ENCODE measurements at regions of chr11 and their contacts with region 1.

Region 1: DNA sequence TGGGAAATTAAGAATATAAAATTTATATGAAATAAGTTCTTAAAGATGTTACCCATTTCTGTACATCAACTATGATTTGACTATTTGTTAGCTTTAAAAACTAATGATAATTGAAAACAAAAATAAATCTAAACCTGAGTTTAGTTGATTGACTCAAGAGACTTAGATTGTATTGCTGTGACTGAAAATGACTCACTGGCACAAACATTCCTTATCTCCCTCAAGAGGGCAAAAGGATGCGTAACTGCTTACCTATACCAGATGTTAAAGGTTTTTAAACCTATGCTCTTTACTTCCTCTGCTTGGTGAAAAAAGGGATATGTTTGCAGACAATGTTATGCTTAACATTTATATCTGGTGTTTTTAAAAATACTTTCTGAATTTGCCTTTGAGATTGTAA is 30.3 kb downstream of the ATM start:
- DNase-seq: no peak
- H3K4me3 ChIP-seq: no peak overlapping the region
- H3K4me3 Mint-ChIP-seq: no peak overlapping the region
- H3K27ac ChIP-seq: no peak overlapping the region
- H3K27ac Mint-ChIP-seq: peak overlapping the region in 2 of 8 donors; percentile 18 to 66
- H3K4me1 ChIP-seq: peaks cover 26% of the 10 kb centered on the region
- H3K4me1 Mint-ChIP-seq: peaks cover 37 to 66% (median 59%) of the 10 kb centered on the region in 3 donors
- H3K27me3 ChIP-seq: no peaks in the 10 kb centered on the region
- H3K27me3 Mint-ChIP-seq: no peaks in the 10 kb centered on the region

Region 2: GRCh38 chr11:108222686-108223448 is 30.3 kb before region 1 on chr11 and contains the start of gene ATM:
- CTCF ChIA-PET with region 1: interaction called, 19 read pairs
- POLR2A ChIA-PET with region 1: interaction called, 18 read pairs
- DNase-seq: peak; percentile 98 to 100 (median 99)
- H3K4me3 ChIP-seq: peak within 1 kb of the TSS; percentile 97
- H3K4me3 Mint-ChIP-seq: no peak within 1 kb of the TSS
- H3K27ac ChIP-seq: peak within 1 kb of the TSS; percentile 100
- H3K27ac Mint-ChIP-seq: no peak within 1 kb of the TSS
- H3K4me1 ChIP-seq: peaks cover 31% of the 10 kb centered on the region
- H3K4me1 Mint-ChIP-seq: peaks cover 48 to 66% (median 65%) of the 10 kb centered on the region in 3 donors
- H3K27me3 ChIP-seq: no peaks in the 10 kb centered on the region
- H3K27me3 Mint-ChIP-seq: no peaks in the 10 kb centered on the region
- total RNA-seq, gene ATM: 76.0 to 77.1 TPM

Region 3: DNA sequence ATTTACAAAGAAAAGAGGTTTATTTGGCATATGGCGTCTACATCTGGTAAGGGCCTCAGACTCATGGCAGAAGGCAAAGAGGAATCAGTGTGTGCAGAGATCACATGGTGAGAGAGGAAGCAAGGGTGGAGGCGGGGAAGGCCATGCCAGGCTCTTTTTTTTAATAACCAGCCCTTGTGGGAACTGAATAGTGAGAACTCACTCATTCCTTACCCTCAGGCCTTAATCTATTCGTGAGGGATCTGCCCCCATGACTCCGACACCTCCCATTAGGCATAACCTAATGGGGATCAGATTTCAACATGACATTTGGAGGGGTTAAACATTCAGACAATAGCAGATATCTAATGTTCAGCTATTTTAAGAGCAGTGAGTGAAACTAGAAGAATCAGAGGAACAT is 25.4 kb after region 1 on chr11:
- CTCF ChIA-PET with region 1: interaction called, 3 read pairs
- POLR2A ChIA-PET with region 1: interaction called, 14 read pairs
- DNase-seq: no peak
- H3K4me3 ChIP-seq: no peak overlapping the region
- H3K4me3 Mint-ChIP-seq: no peak overlapping the region
- H3K27ac ChIP-seq: no peak overlapping the region
- H3K27ac Mint-ChIP-seq: peak overlapping the region in 6 of 8 donors; percentile 12 to 81 (median 60)
- H3K4me1 ChIP-seq: peaks cover 18% of the 10 kb centered on the region
- H3K4me1 Mint-ChIP-seq: peaks cover 52 to 64% (median 53%) of the 10 kb centered on the region in 3 donors
- H3K27me3 ChIP-seq: no peaks in the 10 kb centered on the region
- H3K27me3 Mint-ChIP-seq: no peaks in the 10 kb centered on the region